Activated B cell treated with CpG ODN at 0.5 μM for 24 hours (primary cell): ENCODE measurements at regions of chr5 and their contacts with region 1.

Region 1: DNA sequence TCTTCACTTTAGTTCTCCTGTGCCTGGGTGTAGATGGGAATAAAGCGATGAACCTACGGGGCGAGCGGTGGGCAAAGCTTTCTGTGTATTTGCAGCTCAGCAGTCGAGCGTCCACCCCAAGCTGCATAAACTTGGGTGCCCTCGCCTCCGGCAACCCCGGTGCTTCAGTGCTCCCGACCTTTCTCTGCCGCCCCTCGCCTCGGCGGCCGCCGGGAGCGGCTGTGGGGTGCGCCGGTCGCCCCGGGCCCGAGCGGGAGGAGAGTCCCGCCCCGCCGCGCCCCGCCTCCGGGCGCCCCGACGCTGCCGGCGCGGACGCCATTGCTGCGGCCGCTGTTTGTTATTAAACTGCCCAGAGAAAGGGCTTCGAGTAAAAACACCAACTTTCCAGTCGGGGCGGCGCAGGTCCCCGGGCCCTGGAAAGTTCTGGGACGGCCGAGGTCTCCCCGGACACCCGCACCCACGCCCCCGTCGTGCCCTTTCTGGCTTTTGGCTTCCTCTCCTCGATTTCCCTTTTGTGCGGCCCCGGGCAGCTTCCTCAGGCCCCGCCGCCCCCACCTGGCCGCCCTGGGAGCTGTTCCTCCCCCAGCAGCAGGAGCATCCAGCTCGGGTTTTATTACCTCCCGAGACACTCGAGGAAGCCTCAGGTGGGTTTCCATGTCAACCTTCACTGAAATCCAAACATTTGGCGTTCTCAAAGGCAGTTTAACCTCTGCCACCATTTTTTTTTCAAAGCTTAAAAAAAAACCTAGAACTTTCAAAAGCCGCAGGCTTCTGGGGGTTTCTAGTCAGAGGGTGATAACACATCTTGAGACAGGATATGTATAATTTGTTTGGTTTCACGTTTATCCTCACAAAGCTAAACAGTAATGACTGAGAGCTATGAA is 334.3 kb downstream of the CWC27 start:
- DNase-seq: peak; percentile 57
- ATAC-seq: peak; percentile 89
- H3K4me3 Mint-ChIP-seq: peak overlapping the region; percentile 88
- H3K27ac Mint-ChIP-seq: peak overlapping the region; percentile 91
- H3K4me1 Mint-ChIP-seq: peaks cover 27% of the 10 kb centered on the region
- H3K27me3 Mint-ChIP-seq: no peaks in the 10 kb centered on the region
- CTCF ChIP-seq: no peak

Region 2: DNA sequence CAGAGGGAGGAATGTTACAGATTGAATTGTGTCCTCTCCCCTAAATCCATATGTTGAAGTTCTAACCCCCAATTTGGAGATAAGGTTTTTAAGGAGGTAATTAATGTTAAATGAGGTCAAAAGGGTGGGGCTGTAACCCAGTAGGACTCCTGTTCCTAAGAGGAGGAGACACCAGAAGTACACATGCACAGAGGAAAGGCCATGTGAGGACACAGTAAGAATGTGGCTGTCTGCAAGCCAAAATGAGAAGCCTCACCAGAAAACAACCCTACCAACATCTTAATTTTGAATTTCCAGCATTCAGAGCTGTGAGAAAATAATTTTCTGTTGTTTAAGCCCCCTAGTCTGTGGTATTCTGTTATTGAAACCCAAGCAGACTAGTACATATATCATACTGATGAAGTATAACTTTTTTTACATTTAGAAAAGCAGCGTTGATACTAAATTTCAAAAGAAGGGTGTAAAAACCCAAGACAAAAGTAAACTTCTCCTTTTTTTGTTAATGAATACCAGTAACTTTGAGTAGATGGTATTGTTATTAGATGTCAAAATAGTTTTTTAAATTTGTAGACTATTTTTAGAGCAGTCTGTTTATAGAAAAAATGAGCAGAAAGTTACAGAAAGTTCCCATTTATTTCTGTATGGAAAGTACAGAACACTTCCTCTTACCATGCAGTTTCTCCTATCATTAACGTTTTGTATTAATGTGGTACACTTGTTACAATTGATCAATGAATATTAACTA is 912.3 kb before region 1 on chr5:
- CTCF ChIA-PET with region 1: no interaction called
- POLR2A ChIA-PET with region 1: no interaction called
- intact Hi-C with region 1: no loop called
- DNase-seq: no peak
- ATAC-seq: no peak
- H3K4me3 Mint-ChIP-seq: no peak overlapping the region
- H3K27ac Mint-ChIP-seq: no peak overlapping the region
- H3K4me1 Mint-ChIP-seq: no peaks in the 10 kb centered on the region
- H3K27me3 Mint-ChIP-seq: no peaks in the 10 kb centered on the region
- CTCF ChIP-seq: no peak

Region 3: DNA sequence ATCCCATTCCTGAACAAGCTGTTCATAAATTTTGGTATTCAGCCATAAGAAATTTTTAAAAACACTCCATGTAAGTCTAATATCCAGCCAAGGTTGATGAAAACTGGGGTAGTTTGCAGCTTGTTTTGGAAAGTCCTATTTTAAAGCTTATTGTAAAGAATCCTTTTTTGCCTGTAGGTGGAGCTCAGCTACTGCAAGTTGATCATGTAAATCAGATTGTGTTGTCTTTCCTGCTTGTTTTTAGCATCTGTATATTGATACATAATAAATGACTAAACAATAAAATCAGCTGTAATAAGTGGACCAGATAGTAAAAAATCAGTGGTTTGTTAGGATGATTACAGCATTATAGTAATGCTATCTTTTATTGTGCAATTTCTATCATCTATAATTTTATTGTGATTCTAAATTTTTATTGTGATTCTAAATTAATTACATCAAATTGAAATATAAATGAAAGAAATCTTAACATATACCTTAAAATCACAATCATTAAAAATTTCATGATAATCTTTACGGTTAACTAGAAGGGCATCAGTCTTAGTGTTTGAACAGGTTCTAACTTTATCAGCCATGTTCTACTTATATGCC is 291.9 kb before region 1 on chr5:
- CTCF ChIA-PET with region 1: interaction called, 10 read pairs
- POLR2A ChIA-PET with region 1: no interaction called
- intact Hi-C with region 1: loop called (anchors 5 kb)
- DNase-seq: no peak
- ATAC-seq: no peak
- H3K4me3 Mint-ChIP-seq: no peak overlapping the region
- H3K27ac Mint-ChIP-seq: no peak overlapping the region
- H3K4me1 Mint-ChIP-seq: no peaks in the 10 kb centered on the region
- H3K27me3 Mint-ChIP-seq: no peaks in the 10 kb centered on the region
- CTCF ChIP-seq: no peak

Region 4: GRCh38 chr5:64971513-64971912 is 131.6 kb before region 1 on chr5:
- CTCF ChIA-PET with region 1: interaction called, 3 read pairs
- POLR2A ChIA-PET with region 1: interaction called, 6 read pairs
- intact Hi-C with region 1: loop called (anchors 1 kb)
- DNase-seq: no peak
- ATAC-seq: no peak
- H3K4me3 Mint-ChIP-seq: no peak overlapping the region
- H3K27ac Mint-ChIP-seq: no peak overlapping the region
- H3K4me1 Mint-ChIP-seq: no peaks in the 10 kb centered on the region
- H3K27me3 Mint-ChIP-seq: no peaks in the 10 kb centered on the region
- CTCF ChIP-seq: no peak

Region 5: GRCh38 chr5:65066385-65067146 is 36.5 kb before region 1 on chr5:
- CTCF ChIA-PET with region 1: no interaction called
- POLR2A ChIA-PET with region 1: interaction called, 6 read pairs
- intact Hi-C with region 1: loop called (anchors 5 kb)
- DNase-seq: no peak
- ATAC-seq: peak; percentile 43
- H3K4me3 Mint-ChIP-seq: no peak overlapping the region
- H3K27ac Mint-ChIP-seq: peak overlapping the region; percentile 60
- H3K4me1 Mint-ChIP-seq: peaks cover 58% of the 10 kb centered on the region
- H3K27me3 Mint-ChIP-seq: no peaks in the 10 kb centered on the region
- CTCF ChIP-seq: no peak

Region 6: DNA sequence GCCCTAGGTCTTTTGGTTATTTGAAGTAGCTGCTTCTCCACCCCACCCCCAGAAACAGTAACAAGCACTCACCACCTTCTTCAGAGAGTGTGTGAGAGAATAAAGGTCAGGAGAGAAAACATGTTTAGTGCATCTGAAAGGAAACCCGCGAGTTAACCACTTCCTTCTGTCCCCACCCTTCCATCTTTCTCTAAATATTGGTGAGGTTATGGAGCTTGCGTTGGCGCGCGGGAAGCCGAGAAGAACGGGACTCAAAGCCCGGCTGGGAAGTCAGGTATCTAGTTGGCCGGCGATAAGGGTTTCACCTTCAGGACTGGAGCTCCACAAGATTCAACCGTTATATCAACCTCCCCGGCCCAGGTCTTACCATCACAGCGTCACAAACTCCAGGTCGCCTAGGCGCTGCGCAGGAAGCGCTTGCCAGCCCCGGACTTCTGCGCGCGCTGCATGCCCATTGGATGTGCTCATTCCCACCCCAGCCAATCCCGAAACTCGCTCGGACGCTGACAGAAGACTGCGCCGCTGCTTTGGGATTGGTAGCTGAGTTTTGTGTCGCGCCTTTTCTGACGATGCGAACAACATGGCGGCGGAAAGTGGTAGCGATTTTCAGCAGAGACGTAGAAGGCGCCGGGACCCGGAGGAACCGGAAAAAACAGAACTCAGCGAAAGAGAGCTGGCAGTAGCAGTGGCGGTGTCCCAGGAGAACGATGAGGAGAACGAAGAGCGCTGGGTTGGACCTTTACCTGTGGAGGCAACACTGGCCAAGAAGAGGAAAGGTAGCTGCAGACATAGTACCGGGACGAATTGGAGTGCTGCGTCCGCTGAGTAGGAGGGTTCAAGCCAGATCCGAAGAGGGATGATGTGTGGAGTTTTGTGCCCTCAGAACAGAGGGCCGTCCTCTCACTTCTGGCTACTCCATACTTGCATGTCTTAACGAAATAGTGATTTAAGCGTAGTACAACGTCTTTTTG is 459.9 kb after region 1 on chr5 and contains the starts of genes CENPK and PPWD1:
- CTCF ChIA-PET with region 1: no interaction called
- POLR2A ChIA-PET with region 1: no interaction called
- intact Hi-C with region 1: loop called (anchors 5 kb)
- DNase-seq: peak; percentile 81
- ATAC-seq: peak; percentile 99
- H3K4me3 Mint-ChIP-seq: peak within 1 kb of the TSS; percentile 96
- H3K27ac Mint-ChIP-seq: peak within 1 kb of the TSS; percentile 97
- H3K4me1 Mint-ChIP-seq: peaks cover 41% of the 10 kb centered on the region
- H3K27me3 Mint-ChIP-seq: no peaks in the 10 kb centered on the region
- CTCF ChIP-seq: no peak
- total RNA-seq, gene CENPK: 10.7 and 15.1 TPM in 2 replicates
- total RNA-seq, gene PPWD1: 57.8 and 69.7 TPM in 2 replicates